PC-9 (cell line): ENCODE measurements at regions of chr1 and their contacts with region 1.

Region 1: GRCh38 chr1:19504796-19505692 is 19.7 kb upstream of the CAPZB start:
- DNase-seq: no peak
- H3K4me3 ChIP-seq: no peak overlapping the region
- H3K27ac ChIP-seq: no peak overlapping the region
- H3K4me1 ChIP-seq: no peaks in the 10 kb centered on the region
- H3K27me3 ChIP-seq: no peaks in the 10 kb centered on the region
- CTCF ChIP-seq: no peak

Region 2: DNA sequence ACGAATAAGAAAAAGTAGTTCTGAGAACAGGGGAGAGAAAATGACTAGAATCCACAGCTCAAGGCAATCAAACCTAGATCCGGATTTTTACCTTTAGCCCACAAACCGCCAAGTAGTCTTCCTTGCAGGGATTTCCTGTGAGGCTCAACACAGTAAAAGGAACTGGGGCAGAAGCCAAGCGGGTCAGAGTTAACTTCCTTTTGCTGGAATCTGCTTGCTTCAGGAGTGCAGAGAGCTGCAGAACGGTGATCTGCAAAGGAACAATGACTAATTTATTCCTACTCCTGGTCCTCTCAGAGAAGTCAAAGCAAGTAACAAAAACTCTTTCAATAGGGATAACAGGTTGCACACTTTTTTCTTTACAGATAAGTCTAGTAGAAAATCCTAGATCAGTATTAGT is 348.4 kb before region 1 on chr1:
- CTCF ChIA-PET with region 1: no interaction called
- POLR2A ChIA-PET with region 1: no interaction called
- intact Hi-C with region 1: no loop called
- DNase-seq: peak; percentile 33 to 82
- H3K4me3 ChIP-seq: no peak overlapping the region
- H3K27ac ChIP-seq: peak overlapping the region; percentile 50
- H3K4me1 ChIP-seq: peaks cover 21% of the 10 kb centered on the region
- H3K27me3 ChIP-seq: no peaks in the 10 kb centered on the region
- CTCF ChIP-seq: no peak

Region 3: DNA sequence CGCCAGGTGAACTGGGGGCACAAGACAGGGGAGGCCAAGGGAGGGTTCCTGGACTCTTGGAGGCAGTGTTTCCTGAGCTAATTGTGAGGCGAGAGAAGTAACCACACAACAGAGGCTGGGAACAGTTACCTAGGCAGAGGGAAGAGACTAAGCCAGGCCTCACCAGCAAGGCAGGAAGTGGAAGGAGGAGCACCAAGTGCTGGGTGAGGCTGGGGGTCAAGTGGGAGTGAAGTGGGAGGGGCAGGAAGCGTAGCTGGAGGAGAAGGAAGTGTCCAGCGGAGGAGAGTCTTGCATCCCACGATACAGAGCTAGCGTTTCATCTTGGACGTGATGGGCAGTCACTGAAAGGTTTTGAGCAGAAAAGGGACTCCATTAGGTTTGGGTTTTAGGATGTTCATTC is 28.6 kb after region 1 on chr1:
- CTCF ChIA-PET with region 1: no interaction called
- POLR2A ChIA-PET with region 1: no interaction called
- intact Hi-C with region 1: no loop called
- DNase-seq: no peak
- H3K4me3 ChIP-seq: no peak overlapping the region
- H3K27ac ChIP-seq: no peak overlapping the region
- H3K4me1 ChIP-seq: no peaks in the 10 kb centered on the region
- H3K27me3 ChIP-seq: no peaks in the 10 kb centered on the region
- CTCF ChIP-seq: no peak

Region 4: DNA sequence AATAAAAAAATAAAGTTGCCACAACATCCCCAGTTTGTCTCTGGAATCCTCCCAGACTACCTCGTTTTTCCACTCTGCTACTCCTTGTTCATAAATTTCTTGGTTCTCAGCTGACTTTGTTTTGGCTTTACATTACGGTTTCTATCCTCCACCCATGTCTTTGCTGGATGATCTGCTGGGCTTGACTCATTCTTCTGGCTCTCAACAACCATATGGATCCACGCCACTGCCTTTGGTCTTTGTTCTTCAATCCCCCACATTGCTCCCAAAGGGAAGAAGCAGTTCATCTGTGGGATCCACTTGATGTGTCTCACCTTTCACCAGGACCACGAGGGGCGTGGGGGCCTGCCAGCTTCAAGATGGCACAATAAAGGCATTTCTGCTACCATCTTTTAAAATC is 72.0 kb after region 1 on chr1:
- CTCF ChIA-PET with region 1: no interaction called
- POLR2A ChIA-PET with region 1: no interaction called
- intact Hi-C with region 1: loop called (anchors 10 kb)
- DNase-seq: no peak
- H3K4me3 ChIP-seq: no peak overlapping the region
- H3K27ac ChIP-seq: no peak overlapping the region
- H3K4me1 ChIP-seq: no peaks in the 10 kb centered on the region
- H3K27me3 ChIP-seq: no peaks in the 10 kb centered on the region
- CTCF ChIP-seq: no peak

Region 5: DNA sequence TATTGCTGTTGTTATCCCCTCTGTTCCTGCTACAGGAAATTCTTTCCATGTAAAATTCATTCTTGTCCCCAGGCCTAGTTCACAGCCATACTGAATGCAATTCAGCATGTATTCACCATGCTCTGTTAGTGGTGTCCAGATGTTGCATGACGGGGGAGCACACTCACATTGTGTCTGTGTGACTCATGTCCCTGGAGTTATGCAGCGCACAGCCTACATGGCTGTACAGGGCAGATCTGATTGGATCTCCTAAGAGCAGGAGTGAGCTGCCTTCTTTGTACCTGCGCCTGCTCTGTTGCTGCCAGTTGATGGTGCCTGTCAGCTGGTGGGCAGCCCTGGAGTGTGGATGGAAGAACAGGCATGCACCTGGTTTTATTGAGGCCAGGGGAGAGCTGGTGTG is 177.2 kb after region 1 on chr1:
- CTCF ChIA-PET with region 1: no interaction called
- POLR2A ChIA-PET with region 1: interaction called, 19 read pairs
- intact Hi-C with region 1: no loop called
- DNase-seq: no peak
- H3K4me3 ChIP-seq: no peak overlapping the region
- H3K27ac ChIP-seq: no peak overlapping the region
- H3K4me1 ChIP-seq: no peaks in the 10 kb centered on the region
- H3K27me3 ChIP-seq: no peaks in the 10 kb centered on the region
- CTCF ChIP-seq: no peak